K562 (cell line): ENCODE measurements at regions of chr1 and their contacts with region 1.

Region 1: DNA sequence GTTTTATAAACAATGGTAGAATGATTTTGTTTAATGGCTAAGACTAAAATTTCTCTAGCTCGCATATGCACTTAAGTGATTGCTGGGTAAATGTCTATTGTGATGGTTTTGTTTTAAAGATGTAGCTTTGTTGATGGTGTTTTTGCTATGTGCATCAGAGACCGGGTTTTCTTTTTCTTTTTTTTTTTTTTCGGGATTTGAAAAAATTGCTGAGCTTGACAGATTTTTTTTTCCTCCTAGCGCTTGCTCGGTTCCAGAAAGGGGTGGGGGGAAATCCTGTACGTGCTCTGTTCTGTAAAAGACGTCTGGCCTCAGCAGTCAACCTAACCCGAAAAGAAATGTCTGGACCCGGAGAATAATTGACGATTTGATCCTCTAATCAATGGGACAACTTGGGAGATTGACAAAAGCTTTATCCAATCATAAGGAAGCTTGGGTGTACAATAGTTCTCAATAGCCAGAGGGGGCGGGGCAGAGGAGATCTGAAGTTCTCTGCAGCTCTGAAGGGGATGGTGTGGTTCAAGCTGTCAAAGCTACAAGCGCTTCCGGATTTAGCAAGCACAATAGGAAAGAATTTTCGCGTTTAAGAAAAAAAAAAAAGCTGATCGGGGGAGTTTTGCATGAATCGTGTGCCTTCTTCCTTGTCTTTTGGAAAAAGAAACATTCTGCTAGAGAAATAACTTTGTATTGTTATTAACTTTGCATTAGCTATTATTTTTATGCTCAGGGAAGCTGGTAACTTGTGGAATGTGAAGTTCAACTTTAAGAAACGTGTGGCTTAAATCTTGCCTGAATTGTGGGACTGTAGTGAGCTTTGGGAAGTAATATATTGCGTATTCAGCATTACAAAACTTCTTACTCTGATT is 4.5 kb upstream of the NFIA start:
- DNase-seq: peak; percentile 77 to 99 (median 90)
- ATAC-seq: peak; percentile 63
- H3K4me3 ChIP-seq: peak overlapping the region; percentile 47
- H3K27ac ChIP-seq: peak overlapping the region; percentile 73
- H3K4me1 ChIP-seq: peaks cover 8 to 34% of the 10 kb centered on the region in 2 experiments; a peak in 4 of 5 replicates
- H3K27me3 ChIP-seq: no peaks in the 10 kb centered on the region
- CTCF ChIP-seq: no peak; a peak in 1 of 6 replicates
- EP300 ChIP-seq: no peak
- POLR2A ChIP-seq: 0 out of 2 replicates have a peak, but pooled peaks have one; percentile 36
- RAD21 ChIP-seq: no peak

Region 2: GRCh38 chr1:61011561-61012263 is 66.2 kb before region 1 on chr1:
- CTCF ChIA-PET with region 1: no interaction called
- POLR2A ChIA-PET with region 1: interaction called, 4 read pairs
- in situ Hi-C with region 1: no loop called
- intact Hi-C with region 1: loop called (anchors 2 kb)
- DNase-seq: peak in 1 of 4 experiments; percentile 21
- ATAC-seq: no peak
- H3K4me3 ChIP-seq: no peak overlapping the region
- H3K27ac ChIP-seq: peak overlapping the region; percentile 78
- H3K4me1 ChIP-seq: peaks cover 16 to 47% of the 10 kb centered on the region in 2 experiments; a peak in 4 of 5 replicates
- H3K27me3 ChIP-seq: no peaks in the 10 kb centered on the region
- CTCF ChIP-seq: no peak
- EP300 ChIP-seq: no peak
- POLR2A ChIP-seq: no peak
- RAD21 ChIP-seq: no peak

Region 3: GRCh38 chr1:61056573-61057439 is 21.1 kb before region 1 on chr1:
- CTCF ChIA-PET with region 1: no interaction called
- POLR2A ChIA-PET with region 1: interaction called, 18 read pairs
- in situ Hi-C with region 1: no loop called
- intact Hi-C with region 1: loop called (anchors 1 kb)
- DNase-seq: peak; percentile 30 to 76 (median 56)
- ATAC-seq: peak; percentile 44
- H3K4me3 ChIP-seq: peak overlapping the region; percentile 57
- H3K27ac ChIP-seq: peak overlapping the region; percentile 85
- H3K4me1 ChIP-seq: peaks cover 35 to 36% of the 10 kb centered on the region in 2 experiments
- H3K27me3 ChIP-seq: no peaks in the 10 kb centered on the region
- CTCF ChIP-seq: no peak
- EP300 ChIP-seq: no peak
- POLR2A ChIP-seq: peak; percentile 39
- RAD21 ChIP-seq: no peak; a peak in 1 of 4 replicates

Region 4: DNA sequence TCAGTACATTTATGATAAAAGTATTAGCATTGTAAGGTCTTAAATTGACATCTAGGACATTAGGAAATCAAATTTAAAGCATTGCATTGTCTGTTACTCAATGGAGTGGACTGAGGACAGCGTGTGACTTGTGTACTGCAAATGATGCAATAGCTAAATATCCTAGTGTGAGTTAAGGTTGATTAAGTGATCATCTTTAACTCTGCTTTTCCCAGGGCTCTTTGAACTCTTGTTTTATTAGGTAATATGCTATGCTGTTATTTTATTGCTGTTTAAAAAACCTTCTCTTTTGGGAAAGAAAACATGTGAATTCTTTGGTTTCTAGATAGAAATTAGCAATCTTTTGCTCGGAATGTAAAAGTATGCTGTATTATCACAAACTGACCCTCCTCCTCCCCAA is 43.1 kb after region 1 on chr1:
- CTCF ChIA-PET with region 1: no interaction called
- POLR2A ChIA-PET with region 1: interaction called, 4 read pairs
- in situ Hi-C with region 1: no loop called
- intact Hi-C with region 1: loop called (anchors 2 kb)
- DNase-seq: peak in 1 of 4 experiments; percentile 49
- ATAC-seq: peak; percentile 74
- H3K4me3 ChIP-seq: no peak overlapping the region
- H3K27ac ChIP-seq: peak overlapping the region; percentile 82
- H3K4me1 ChIP-seq: peaks cover 0 to 36% of the 10 kb centered on the region in 2 experiments
- H3K27me3 ChIP-seq: no peaks in the 10 kb centered on the region
- CTCF ChIP-seq: no peak
- EP300 ChIP-seq: peak; percentile 59; the same call in 1 of the 2 replicates
- POLR2A ChIP-seq: 0 out of 2 replicates have a peak, but pooled peaks have one; percentile 23
- RAD21 ChIP-seq: no peak; a peak in 1 of 4 replicates

Region 5: GRCh38 chr1:61131248-61131647 is 53.3 kb after region 1 on chr1:
- CTCF ChIA-PET with region 1: no interaction called
- POLR2A ChIA-PET with region 1: no interaction called
- in situ Hi-C with region 1: no loop called
- intact Hi-C with region 1: no loop called
- DNase-seq: no peak
- ATAC-seq: no peak
- H3K4me3 ChIP-seq: no peak overlapping the region
- H3K27ac ChIP-seq: no peak overlapping the region
- H3K4me1 ChIP-seq: peaks cover 0 to 18% of the 10 kb centered on the region in 2 experiments; a peak in 3 of 5 replicates
- H3K27me3 ChIP-seq: no peaks in the 10 kb centered on the region
- CTCF ChIP-seq: no peak
- EP300 ChIP-seq: no peak
- POLR2A ChIP-seq: no peak
- RAD21 ChIP-seq: no peak

Region 6: DNA sequence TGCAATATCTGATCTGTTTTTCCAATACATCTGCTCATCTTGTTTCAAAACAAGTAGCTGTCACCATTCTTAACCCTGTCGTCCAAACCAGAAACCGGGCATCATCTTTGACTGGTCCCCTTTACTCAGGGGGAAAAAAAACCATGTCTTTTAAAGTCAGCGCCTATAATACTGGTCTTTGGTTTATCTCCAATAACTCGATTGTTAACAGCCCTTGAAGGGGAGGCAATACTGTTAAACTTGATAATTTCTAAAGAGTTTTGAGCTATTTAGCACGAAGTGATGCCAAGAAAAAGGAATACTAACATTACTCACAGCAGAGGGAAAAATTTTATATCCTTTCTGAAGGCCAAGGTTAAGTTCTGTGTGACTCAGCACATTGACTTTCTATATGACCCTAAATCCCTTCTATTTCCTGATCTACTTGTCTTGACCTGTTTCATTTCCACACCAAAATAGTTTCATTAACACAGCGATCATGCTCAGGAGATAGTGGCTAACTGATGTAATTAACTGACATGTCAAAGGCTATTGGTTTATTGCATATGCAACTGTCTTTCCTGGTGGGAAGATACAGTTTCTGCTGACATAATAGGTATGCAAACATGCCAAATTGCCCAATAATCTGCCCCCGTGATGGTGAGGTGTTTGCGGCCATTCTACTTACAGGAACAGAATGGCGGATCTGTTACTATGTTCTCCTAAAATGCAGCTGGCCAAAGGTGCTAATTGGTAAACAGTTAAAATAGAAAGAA is 63.6 kb after region 1 on chr1:
- CTCF ChIA-PET with region 1: no interaction called
- POLR2A ChIA-PET with region 1: interaction called, 3 read pairs
- in situ Hi-C with region 1: no loop called
- intact Hi-C with region 1: loop called (anchors 2 kb)
- DNase-seq: peak in 2 of 4 experiments; percentile 25 to 47
- ATAC-seq: peak; percentile 56
- H3K4me3 ChIP-seq: no peak overlapping the region
- H3K27ac ChIP-seq: peak overlapping the region; percentile 51
- H3K4me1 ChIP-seq: peaks cover 8 to 33% of the 10 kb centered on the region in 2 experiments
- H3K27me3 ChIP-seq: no peaks in the 10 kb centered on the region
- CTCF ChIP-seq: no peak
- EP300 ChIP-seq: peak; percentile 94
- POLR2A ChIP-seq: no peak
- RAD21 ChIP-seq: 0 out of 4 replicates have a peak, but pooled peaks of 1 of the 2 experiments have one; percentile 6

Region 7: GRCh38 chr1:61184040-61184713 is 106.3 kb after region 1 on chr1:
- CTCF ChIA-PET with region 1: no interaction called
- POLR2A ChIA-PET with region 1: no interaction called
- in situ Hi-C with region 1: no loop called
- intact Hi-C with region 1: loop called (anchors 5 kb)
- DNase-seq: peak; percentile 56 to 85 (median 68)
- ATAC-seq: peak; percentile 84
- H3K4me3 ChIP-seq: 0 out of 2 replicates have a peak overlapping the region, but pooled peaks have one; percentile 4
- H3K27ac ChIP-seq: peak overlapping the region; percentile 89
- H3K4me1 ChIP-seq: peaks cover 12 to 32% of the 10 kb centered on the region in 2 experiments
- H3K27me3 ChIP-seq: no peaks in the 10 kb centered on the region
- CTCF ChIP-seq: no peak
- EP300 ChIP-seq: no peak
- POLR2A ChIP-seq: peak; percentile 36; the same call in 1 of the 2 replicates
- RAD21 ChIP-seq: peak in 1 of 2 experiments; percentile 16; a peak in 1 of 4 replicates

Region 8: DNA sequence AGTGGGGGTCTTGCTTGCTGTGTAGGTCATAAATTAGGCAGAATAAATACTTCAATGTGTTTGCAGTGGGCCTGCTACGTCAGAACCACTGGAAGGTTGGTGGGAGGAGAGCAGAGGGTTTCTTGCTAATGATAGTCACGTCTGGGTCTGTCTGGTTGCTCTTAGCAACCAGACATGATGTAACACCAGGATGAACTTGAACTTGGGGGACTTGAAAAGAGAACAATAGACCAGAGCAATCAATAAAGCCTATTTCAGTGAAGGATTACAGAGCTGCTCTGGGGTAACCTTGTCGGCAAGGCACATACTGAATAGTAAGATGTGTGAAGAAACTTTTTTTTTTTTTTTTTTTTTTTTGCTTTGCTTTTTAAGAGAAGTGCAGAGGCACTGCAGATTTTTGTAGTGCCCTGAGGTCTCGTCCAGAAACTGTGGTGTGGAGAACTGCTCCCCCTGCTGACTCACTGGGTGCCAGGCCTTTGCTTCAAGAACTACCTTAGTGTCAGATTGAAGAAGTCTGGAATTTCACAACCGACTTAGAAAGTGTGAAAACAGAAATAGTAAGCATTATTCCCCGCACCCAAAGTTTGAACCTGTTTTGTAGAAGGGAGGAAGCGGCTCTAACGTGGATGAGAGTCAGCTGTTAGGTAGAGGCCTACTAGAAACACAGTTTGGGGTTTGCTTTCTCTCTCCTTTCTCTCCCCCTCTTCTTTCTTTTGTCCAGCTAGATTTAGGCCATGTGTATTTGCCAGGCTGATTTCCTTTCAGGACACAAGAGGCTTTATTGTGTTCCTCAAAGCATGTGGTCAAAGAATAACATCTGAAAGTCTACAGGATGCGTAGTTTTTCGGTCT is 375.4 kb after region 1 on chr1:
- CTCF ChIA-PET with region 1: no interaction called
- POLR2A ChIA-PET with region 1: no interaction called
- in situ Hi-C with region 1: no loop called
- intact Hi-C with region 1: loop called (anchors 2 kb)
- DNase-seq: peak; percentile 59 to 85 (median 68)
- ATAC-seq: peak; percentile 97
- H3K4me3 ChIP-seq: no peak overlapping the region
- H3K27ac ChIP-seq: no peak overlapping the region
- H3K4me1 ChIP-seq: peaks cover 3 to 7% of the 10 kb centered on the region in 2 experiments; a peak in 3 of 5 replicates
- H3K27me3 ChIP-seq: no peaks in the 10 kb centered on the region
- CTCF ChIP-seq: peak; percentile 74 to 85 (median 83)
- EP300 ChIP-seq: no peak
- POLR2A ChIP-seq: no peak
- RAD21 ChIP-seq: peak; percentile 80 to 82

Region 9: GRCh38 chr1:61481313-61481712 is 403.4 kb after region 1 on chr1:
- CTCF ChIA-PET with region 1: no interaction called
- POLR2A ChIA-PET with region 1: no interaction called
- in situ Hi-C with region 1: no loop called
- intact Hi-C with region 1: no loop called
- DNase-seq: no peak
- ATAC-seq: no peak
- H3K4me3 ChIP-seq: no peak overlapping the region
- H3K27ac ChIP-seq: no peak overlapping the region
- H3K4me1 ChIP-seq: no peaks in the 10 kb centered on the region
- H3K27me3 ChIP-seq: peaks cover 15 to 38% of the 10 kb centered on the region in 2 experiments; a peak in 4 of 5 replicates
- CTCF ChIP-seq: no peak
- EP300 ChIP-seq: no peak
- POLR2A ChIP-seq: no peak
- RAD21 ChIP-seq: no peak